Activated CD4-positive, alpha-beta memory T cell treated with anti-CD3 and anti-CD28 coated beads for 36 hours (primary cell): ENCODE measurements at regions of chr5 and their contacts with region 1.

Region 1: DNA sequence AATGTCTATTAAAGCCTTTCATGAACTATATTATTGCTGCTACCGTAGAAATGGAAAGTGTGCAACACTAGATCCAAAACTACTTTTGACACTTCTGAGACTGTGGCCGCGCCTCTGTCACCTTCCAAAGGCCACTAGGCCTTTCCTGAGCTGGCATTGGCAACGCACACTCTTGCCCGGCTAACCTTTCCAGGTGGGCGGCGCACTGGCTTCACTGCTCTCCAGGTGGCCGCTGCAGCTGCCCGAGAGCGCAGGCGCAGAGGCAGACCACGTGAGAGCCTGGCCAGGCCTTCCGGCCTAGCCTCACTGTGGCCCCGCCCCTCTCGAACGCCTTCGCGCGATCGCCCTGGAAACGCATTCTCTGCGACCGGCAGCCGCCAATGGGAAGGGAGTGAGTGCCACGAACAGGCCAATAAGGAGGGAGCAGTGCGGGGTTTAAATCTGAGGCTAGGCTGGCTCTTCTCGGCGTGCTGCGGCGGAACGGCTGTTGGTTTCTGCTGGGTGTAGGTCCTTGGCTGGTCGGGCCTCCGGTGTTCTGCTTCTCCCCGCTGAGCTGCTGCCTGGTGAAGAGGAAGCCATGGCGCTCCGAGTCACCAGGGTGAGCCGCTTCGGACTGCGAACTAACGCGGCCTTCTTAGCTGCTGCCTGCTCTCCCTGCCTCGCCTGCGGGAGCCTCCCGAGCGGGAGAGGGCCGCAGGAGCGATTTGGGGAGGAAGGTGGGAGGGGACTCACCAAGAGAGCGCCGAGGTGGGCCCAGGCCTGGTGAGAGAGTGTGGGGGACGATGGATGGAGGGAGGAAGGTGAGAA is at the start of gene CCNB1:
- DNase-seq: peak; percentile 99
- H3K4me3 Mint-ChIP-seq: peak within 1 kb of the TSS; percentile 92
- H3K27ac Mint-ChIP-seq: peak within 1 kb of the TSS; percentile 78
- H3K4me1 Mint-ChIP-seq: peaks cover 28% of the 10 kb centered on the region
- H3K27me3 Mint-ChIP-seq: no peaks in the 10 kb centered on the region
- total RNA-seq, gene CCNB1: 178 to 189 TPM

Region 2: DNA sequence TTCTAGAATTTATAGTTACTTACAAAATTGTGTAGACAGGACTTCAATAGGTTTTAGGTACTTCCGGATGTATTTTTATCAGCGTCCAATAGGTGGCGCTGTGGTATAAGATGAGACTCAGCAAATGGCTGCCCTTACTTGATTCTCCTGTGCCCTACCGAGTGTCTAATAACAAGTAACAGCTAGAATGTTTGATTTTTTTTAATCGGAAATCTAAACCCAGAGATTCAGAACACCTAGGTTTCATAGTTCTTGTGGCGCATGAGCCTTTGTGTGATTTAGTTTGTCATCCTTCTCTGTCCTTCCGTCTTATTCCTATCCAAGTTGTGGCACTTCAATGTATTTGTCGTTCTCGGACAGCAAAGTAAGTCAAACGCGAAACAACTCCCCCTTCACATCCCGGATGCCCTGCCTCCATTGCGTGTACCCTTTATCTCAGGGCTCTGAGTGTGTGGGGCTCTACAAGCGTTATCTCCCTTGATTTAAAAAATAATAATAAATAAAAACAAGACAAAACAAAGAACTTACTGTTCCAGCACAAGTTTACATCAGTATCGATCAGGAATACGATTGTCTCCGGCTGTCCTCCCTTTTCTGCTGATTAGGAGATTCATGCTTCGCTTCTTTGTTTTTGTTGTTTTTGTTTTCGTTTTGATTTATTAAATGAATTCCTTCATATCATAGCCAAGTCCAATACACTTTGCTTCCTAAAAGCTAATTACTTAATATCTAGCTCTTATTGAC is 123.8 kb before region 1 on chr5:
- CTCF ChIA-PET with region 1: no interaction called
- POLR2A ChIA-PET with region 1: no interaction called
- intact Hi-C with region 1: loop called (anchors 10 kb)
- DNase-seq: peak; percentile 82
- H3K4me3 Mint-ChIP-seq: peak overlapping the region; percentile 70
- H3K27ac Mint-ChIP-seq: peak overlapping the region; percentile 76
- H3K4me1 Mint-ChIP-seq: peaks cover 8% of the 10 kb centered on the region
- H3K27me3 Mint-ChIP-seq: no peaks in the 10 kb centered on the region

Region 3: GRCh38 chr5:69189162-69190086 is 22.5 kb after region 1 on chr5 and contains the start of gene CENPH:
- CTCF ChIA-PET with region 1: no interaction called
- POLR2A ChIA-PET with region 1: interaction called, 13 read pairs
- intact Hi-C with region 1: loop called (anchors 1 kb)
- DNase-seq: peak; percentile 96
- H3K4me3 Mint-ChIP-seq: peak within 1 kb of the TSS; percentile 90
- H3K27ac Mint-ChIP-seq: peak within 1 kb of the TSS; percentile 89
- H3K4me1 Mint-ChIP-seq: peaks cover 6% of the 10 kb centered on the region
- H3K27me3 Mint-ChIP-seq: no peaks in the 10 kb centered on the region
- total RNA-seq, gene CENPH: 80.7 to 82.0 TPM

Region 4: DNA sequence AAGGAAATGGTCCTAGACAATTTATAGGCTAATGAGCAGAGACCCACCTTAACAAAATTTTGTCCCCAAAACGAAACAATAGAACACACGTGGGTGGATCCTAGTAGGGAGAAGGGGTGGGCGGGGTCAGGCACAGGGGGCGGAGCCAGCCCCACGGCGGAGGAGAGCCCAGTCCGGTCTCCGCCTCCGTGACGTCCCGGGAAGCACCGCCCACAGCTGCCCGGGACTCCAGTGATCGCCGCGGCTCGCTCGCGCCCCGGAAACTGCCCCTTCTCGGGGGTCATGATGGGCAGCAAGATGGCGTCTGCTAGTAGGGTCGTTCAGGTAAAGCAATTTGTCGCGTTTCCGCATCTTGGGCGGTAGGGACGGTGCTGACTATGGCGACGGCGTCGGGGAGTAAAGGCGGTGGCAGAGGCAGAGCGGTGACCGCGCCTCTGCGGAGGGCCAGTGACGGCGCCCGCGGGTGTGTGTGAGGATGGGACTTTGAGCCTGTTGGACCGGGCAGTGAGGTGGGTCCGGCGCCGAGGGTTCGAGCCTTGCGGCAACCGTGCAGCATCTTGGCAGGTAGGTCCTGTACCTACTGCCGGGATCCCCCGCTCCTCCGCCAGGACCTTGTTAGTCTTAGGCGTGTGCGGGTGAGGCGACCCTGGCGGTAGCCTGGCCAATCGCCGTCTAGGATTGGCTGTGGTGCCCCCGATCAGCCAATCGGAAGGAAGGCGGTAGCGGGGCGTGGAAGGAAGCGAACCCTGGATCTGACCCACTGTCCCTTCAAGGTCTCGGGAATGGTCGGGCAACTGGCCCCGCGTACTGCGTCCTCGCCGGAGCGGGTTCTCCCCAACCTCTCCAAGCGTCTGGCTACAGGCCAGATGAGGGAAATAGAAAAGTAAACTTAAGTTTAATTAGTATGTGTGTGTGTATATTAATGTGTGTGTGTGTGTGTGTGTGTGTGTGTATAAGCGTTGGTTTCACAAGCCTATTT is 50.9 kb after region 1 on chr5:
- CTCF ChIA-PET with region 1: interaction called, 3 read pairs
- POLR2A ChIA-PET with region 1: no interaction called
- intact Hi-C with region 1: loop called (anchors 1 kb)
- DNase-seq: peak; percentile 96
- H3K4me3 Mint-ChIP-seq: peak overlapping the region; percentile 97
- H3K27ac Mint-ChIP-seq: peak overlapping the region; percentile 93
- H3K4me1 Mint-ChIP-seq: peaks cover 15% of the 10 kb centered on the region
- H3K27me3 Mint-ChIP-seq: no peaks in the 10 kb centered on the region

Region 5: GRCh38 chr5:69234457-69235268 is 67.8 kb after region 1 on chr5 and contains the start of gene CDK7:
- CTCF ChIA-PET with region 1: no interaction called
- POLR2A ChIA-PET with region 1: interaction called, 3 read pairs
- intact Hi-C with region 1: loop called (anchors 1 kb)
- DNase-seq: peak; percentile 96
- H3K4me3 Mint-ChIP-seq: peak within 1 kb of the TSS; percentile 98
- H3K27ac Mint-ChIP-seq: peak within 1 kb of the TSS; percentile 81
- H3K4me1 Mint-ChIP-seq: peaks cover 36% of the 10 kb centered on the region
- H3K27me3 Mint-ChIP-seq: no peaks in the 10 kb centered on the region
- total RNA-seq, gene CDK7: 36.2 to 41.2 TPM

Region 6: GRCh38 chr5:69369369-69370121 is 202.7 kb after region 1 on chr5 and contains the starts of genes AK6, RAD17 and TAF9:
- CTCF ChIA-PET with region 1: no interaction called
- POLR2A ChIA-PET with region 1: no interaction called
- intact Hi-C with region 1: loop called (anchors 1 kb)
- DNase-seq: peak; percentile 94
- H3K4me3 Mint-ChIP-seq: peak within 1 kb of the TSS; percentile 98
- H3K27ac Mint-ChIP-seq: peak within 1 kb of the TSS; percentile 97
- H3K4me1 Mint-ChIP-seq: peaks cover 44% of the 10 kb centered on the region
- H3K27me3 Mint-ChIP-seq: no peaks in the 10 kb centered on the region
- total RNA-seq, gene AK6: 79.8 to 87.0 TPM
- total RNA-seq, gene RAD17: 26.9 to 31.9 TPM
- total RNA-seq, gene TAF9: 55.8 to 58.3 TPM